Left lung (tissue), 14 donors: ENCODE measurements at regions of chr16 and their contacts with region 1.

Region 1: DNA sequence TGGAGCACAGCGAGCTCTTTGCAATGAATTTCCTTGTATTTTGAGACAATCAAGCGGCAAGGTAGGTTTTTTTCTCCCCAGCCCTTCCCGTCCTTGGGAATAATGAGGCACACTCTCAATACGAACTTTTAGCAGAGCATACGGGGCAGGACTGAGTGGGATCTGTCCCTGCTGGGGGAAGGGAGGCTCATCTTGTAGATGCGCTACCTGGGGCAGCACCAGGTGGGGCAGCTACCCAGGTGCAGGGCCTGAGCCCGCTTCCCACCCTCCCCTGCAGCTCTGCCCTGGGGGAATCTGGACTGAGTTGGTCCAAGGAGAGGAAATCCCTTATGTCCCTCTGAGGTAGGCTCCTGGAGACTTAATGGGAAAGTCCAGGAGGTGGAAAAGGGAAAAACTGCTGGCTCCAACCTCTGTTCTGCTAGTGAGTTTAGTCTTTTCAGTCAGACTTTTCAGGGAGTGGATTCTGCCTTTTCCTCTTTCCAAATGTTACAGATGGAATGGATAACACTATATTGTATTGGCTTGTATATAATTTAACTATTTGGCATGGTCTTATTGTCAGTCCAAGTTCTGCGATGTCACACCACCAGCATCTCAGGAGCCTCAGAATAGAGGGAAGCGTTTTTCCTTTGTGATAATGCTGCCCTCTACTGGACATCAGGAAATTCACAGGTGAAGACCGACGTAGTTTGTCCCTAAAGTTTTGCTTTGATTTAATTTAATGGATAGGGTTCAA is 9.6 kb upstream of the CES1 start:
- DNase-seq: peak in 1 of 4 donors; percentile 62
- ATAC-seq: peak; percentile 88
- H3K4me3 ChIP-seq: no peak overlapping the region
- H3K27ac ChIP-seq: no peak overlapping the region
- H3K4me1 ChIP-seq: peaks cover 0 to 3% of the 10 kb centered on the region in 2 donors
- H3K27me3 ChIP-seq: peaks cover 0 to 24% of the 10 kb centered on the region in 2 donors
- CTCF ChIP-seq: peak; percentile 72 to 73

Region 2: GRCh38 chr16:55465077-55465896 is 377.2 kb before region 1 on chr16:
- intact Hi-C with region 1: loop called in 1 of 2 experiments (anchors 10 kb)
- DNase-seq: peak; percentile 87 to 93 (median 91)
- ATAC-seq: peak; percentile 99
- H3K4me3 ChIP-seq: no peak overlapping the region
- H3K27ac ChIP-seq: no peak overlapping the region
- H3K4me1 ChIP-seq: peaks cover 0 to 3% of the 10 kb centered on the region in 2 donors
- H3K27me3 ChIP-seq: no peaks in the 10 kb centered on the region
- CTCF ChIP-seq: peak; percentile 99 to 100

Region 3: DNA sequence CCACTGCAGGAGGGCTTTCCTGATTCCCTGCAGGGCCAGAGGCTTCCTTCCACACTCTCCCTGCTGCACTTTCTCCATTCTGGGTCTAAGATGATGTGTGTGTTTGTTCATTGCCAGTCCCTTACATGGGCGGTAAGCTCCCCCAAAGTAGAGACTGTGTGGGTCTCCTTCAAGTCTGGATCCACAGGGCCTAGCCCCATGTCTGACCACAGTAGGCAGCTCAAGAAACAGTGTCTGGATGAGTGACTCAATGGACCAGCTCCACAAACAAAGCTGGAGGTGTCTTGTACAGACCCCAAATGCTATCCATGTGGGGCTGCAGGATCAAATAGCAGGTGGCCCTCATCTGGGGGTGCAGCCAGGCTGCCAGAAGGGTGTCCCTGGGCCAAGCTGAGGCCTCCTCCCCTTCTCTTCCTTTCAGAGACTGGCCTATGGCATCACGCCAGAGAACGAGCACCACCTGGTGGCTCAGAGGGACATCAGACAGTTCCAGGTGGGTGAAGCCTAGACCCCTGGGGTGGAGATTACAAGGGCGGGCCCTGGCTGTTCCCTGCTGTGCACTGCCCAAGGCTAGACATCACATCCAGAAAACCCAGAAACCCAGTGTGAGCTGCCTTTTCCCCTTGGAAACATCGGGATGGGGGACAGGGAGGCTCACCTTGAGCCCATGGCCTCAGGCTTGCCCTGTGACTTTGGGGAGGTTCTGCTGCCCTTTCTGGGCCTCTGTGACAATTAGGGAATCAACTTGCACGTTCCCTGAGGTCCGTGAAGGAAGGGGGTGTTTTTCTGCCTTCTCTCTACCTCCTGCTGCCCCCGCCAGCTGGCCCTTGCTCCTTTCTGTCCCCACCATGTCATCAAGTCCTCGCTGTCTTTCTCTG is 140.9 kb before region 1 on chr16:
- intact Hi-C with region 1: loop called in 1 of 2 experiments (anchors 10 kb)
- DNase-seq: peak in 3 of 4 donors; percentile 45 to 85 (median 53)
- ATAC-seq: peak; percentile 80
- H3K4me3 ChIP-seq: no peak overlapping the region
- H3K27ac ChIP-seq: no peak overlapping the region
- H3K4me1 ChIP-seq: no peaks in the 10 kb centered on the region
- H3K27me3 ChIP-seq: peaks cover 0 to 12% of the 10 kb centered on the region in 2 donors
- CTCF ChIP-seq: peak; percentile 26 to 40

Region 4: DNA sequence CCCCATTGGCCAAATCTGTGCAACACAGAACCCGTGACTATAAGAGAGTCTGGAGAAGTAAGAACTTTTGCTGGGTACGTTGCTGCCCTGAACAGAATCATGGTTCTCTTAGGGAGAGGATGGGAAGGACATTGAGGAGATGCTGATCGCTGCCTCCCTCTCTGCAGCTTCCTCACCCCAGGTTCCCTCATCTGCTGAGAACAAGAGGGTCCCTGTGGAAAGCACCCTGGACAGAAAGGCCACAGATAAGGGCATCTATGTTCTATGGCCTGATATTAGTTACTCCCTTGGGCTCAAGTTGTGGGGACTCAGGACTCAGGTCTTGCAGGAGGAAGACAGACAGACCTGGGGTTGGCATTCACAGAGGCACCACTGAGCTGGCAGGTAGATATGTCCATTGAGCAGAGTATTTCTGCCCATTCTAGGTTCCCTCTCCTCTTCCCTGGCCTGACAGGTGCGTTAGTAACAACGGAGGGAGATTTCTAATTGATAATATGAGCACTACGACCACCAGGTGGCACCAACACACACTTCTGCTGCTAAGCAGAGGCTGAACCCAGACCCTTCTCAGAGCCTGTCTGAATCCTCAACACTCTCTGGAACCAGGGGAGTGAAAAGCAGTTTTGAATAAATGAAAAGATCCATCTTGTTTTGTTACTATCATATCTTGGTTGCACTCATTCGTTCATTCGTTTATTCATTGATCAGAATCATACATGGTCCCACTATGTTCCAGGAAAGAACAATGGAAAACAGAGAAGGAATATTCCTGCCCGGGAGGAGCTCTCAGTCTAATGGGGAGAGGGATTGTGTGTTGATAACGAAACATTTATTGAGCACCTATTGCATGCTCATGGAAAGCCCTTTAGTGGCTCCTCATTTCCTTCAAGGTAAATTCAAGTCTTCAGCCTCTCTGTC is 130.3 kb before region 1 on chr16:
- intact Hi-C with region 1: loop called (anchors 5 to 10 kb)
- DNase-seq: peak in 3 of 4 donors; percentile 46 to 81 (median 64)
- ATAC-seq: peak; percentile 90
- H3K4me3 ChIP-seq: no peak overlapping the region
- H3K27ac ChIP-seq: no peak overlapping the region
- H3K4me1 ChIP-seq: no peaks in the 10 kb centered on the region
- H3K27me3 ChIP-seq: peaks cover 0 to 5% of the 10 kb centered on the region in 2 donors
- CTCF ChIP-seq: peak; percentile 49 to 56

Region 5: DNA sequence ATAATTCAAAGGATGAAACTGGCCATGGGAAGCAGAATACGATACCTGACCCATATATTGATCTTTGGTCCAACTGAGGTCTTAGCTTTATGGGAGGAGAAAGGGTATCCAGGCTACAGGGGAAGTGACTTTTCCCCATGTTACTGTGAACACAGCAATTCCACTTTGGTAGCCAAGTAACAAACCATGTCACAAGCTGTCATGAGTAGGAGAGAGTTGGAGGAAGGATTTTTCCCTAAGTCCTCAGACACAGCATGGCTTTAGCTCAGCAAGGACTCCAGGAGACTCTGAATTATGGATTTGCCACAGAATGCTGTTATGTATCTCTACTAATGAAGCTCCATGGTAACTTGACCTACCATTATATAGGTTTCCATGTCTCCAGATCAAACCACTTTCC is 292.3 kb after region 1 on chr16:
- intact Hi-C with region 1: no loop called
- DNase-seq: no peak
- ATAC-seq: no peak
- H3K4me3 ChIP-seq: no peak overlapping the region
- H3K27ac ChIP-seq: no peak overlapping the region
- H3K4me1 ChIP-seq: no peaks in the 10 kb centered on the region
- H3K27me3 ChIP-seq: peaks cover 0 to 4% of the 10 kb centered on the region in 2 donors
- CTCF ChIP-seq: no peak